ENCODE measurements at regions of chrX and their contacts with region 1.

Region 1: DNA sequence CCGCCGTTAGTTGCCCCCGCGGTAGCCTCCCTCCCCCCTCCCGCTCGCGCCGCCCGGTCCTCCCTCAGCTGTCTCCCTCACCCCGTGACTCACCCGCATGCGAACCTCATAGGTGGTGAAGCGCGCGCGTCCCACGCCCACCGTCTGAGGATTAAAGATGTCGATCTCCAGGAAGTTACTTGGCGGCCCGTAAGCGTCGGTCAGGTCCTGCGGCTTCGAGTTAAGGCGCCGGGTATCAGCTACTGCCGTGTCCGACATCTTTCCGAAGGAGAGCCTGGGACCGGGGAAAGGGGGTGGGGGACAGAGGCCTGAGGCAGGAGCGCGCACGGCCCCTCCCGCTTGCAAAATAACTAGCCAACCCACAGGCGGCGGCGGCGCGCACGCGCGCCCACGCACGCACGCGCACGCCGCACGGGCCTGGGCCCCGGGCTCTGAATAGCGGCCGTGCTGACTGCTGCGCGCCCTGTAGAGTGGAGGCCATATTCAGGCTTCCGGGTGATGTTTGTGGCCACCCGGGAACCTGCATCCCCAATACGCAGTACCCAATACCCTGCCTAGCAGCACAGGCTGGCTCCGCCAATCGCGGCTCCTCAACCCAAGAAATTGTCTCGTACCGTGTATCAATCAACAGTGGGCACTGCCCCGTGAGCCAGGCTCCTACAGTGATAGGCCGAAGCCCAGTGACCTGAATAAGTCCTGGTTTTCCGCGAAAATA is at the start of gene SNX12:
- DNase-seq: peak; percentile 79
- ATAC-seq: peak; percentile 94
- H3K4me3 Mint-ChIP-seq: peak within 1 kb of the TSS; percentile 94
- H3K27ac Mint-ChIP-seq: peak within 1 kb of the TSS; percentile 95
- H3K4me1 Mint-ChIP-seq: peaks cover 19% of the 10 kb centered on the region
- H3K27me3 Mint-ChIP-seq: peaks cover 3% of the 10 kb centered on the region
- CTCF ChIP-seq: no peak
- total RNA-seq, gene SNX12: 43.2 and 44.8 TPM in 2 replicates

Region 2: GRCh38 chrX:69597399-69597798 is 1470.8 kb before region 1 on chrX:
- CTCF ChIA-PET with region 1: no interaction called
- POLR2A ChIA-PET with region 1: no interaction called
- intact Hi-C with region 1: no loop called
- DNase-seq: no peak
- ATAC-seq: no peak
- H3K4me3 Mint-ChIP-seq: no peak overlapping the region
- H3K27ac Mint-ChIP-seq: no peak overlapping the region
- H3K4me1 Mint-ChIP-seq: no peaks in the 10 kb centered on the region
- H3K27me3 Mint-ChIP-seq: no peaks in the 10 kb centered on the region
- CTCF ChIP-seq: no peak

Region 3: GRCh38 chrX:70432936-70433847 is 635.0 kb before region 1 on chrX:
- CTCF ChIA-PET with region 1: no interaction called
- POLR2A ChIA-PET with region 1: no interaction called
- intact Hi-C with region 1: no loop called
- DNase-seq: no peak
- ATAC-seq: no peak
- H3K4me3 Mint-ChIP-seq: peak overlapping the region; percentile 89
- H3K27ac Mint-ChIP-seq: no peak overlapping the region
- H3K4me1 Mint-ChIP-seq: peaks cover 14% of the 10 kb centered on the region
- H3K27me3 Mint-ChIP-seq: no peaks in the 10 kb centered on the region
- CTCF ChIP-seq: no peak

Region 4: DNA sequence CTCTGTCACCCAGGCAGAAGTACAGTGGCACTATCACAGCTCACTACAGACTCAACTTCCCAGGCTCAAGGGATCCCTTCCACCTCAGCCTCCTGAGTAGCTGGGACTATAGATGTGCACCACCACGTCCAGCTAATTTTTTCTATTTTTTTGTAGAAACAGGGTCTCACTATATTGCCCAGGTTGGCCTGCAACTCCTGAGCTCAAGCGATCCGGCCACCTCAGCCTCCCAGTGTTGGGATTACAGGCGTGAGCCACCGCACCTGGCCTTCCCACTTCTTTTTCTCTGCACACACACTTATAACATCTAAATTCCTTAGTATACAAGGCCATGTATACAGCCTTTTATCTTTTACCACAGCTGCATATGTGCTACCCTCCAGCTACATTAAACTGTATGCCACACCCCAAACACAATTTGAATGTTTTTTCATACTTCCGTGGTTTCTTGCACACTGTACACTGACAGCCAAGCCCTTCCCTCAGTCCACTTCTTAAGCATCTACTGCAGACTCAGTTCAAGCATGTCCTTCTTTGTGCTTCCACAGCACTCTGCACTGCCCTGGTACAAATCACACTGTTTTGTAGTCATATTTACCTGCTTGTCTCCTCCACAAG is 143.8 kb before region 1 on chrX:
- CTCF ChIA-PET with region 1: no interaction called
- POLR2A ChIA-PET with region 1: no interaction called
- intact Hi-C with region 1: no loop called
- DNase-seq: no peak
- ATAC-seq: no peak
- H3K4me3 Mint-ChIP-seq: no peak overlapping the region
- H3K27ac Mint-ChIP-seq: no peak overlapping the region
- H3K4me1 Mint-ChIP-seq: no peaks in the 10 kb centered on the region
- H3K27me3 Mint-ChIP-seq: peaks cover 12% of the 10 kb centered on the region
- CTCF ChIP-seq: no peak

Region 5: DNA sequence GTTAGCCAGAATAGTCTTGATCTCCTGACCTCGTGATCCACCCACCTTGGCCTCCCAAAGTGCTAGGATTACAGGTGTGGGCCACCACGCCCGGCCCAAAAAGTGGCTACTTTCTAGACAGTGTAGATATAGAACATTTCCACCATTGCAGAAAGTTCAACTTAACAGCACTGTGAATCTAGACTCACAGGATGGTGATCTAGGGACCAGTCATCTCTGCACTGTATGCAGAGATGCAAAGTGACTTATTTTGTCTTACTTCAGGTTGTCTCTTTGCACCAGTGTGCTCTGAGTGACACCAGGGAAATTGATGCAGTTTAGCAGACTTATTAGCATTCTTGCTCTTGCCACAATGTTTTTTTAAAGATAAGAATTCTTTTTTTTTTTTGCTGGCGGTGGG is 14.6 kb after region 1 on chrX:
- CTCF ChIA-PET with region 1: no interaction called
- POLR2A ChIA-PET with region 1: no interaction called
- intact Hi-C with region 1: no loop called
- DNase-seq: no peak
- ATAC-seq: no peak
- H3K4me3 Mint-ChIP-seq: no peak overlapping the region
- H3K27ac Mint-ChIP-seq: no peak overlapping the region
- H3K4me1 Mint-ChIP-seq: no peaks in the 10 kb centered on the region
- H3K27me3 Mint-ChIP-seq: no peaks in the 10 kb centered on the region
- CTCF ChIP-seq: no peak

Region 6: GRCh38 chrX:71095543-71095911 is 27.3 kb after region 1 on chrX and contains the start of gene FOXO4:
- CTCF ChIA-PET with region 1: no interaction called
- POLR2A ChIA-PET with region 1: no interaction called
- intact Hi-C with region 1: loop called (anchors 1 kb)
- DNase-seq: peak; percentile 72
- ATAC-seq: peak; percentile 90
- H3K4me3 Mint-ChIP-seq: peak within 1 kb of the TSS; percentile 95
- H3K27ac Mint-ChIP-seq: peak within 1 kb of the TSS; percentile 93
- H3K4me1 Mint-ChIP-seq: peaks cover 26% of the 10 kb centered on the region
- H3K27me3 Mint-ChIP-seq: no peaks in the 10 kb centered on the region
- CTCF ChIP-seq: no peak
- total RNA-seq, gene FOXO4: 10.1 and 16.1 TPM in 2 replicates

Region 7: GRCh38 chrX:71118032-71118984 is 50.1 kb after region 1 on chrX and contains the start of gene MED12:
- CTCF ChIA-PET with region 1: no interaction called
- POLR2A ChIA-PET with region 1: interaction called, 39 read pairs
- intact Hi-C with region 1: loop called (anchors 2 kb)
- DNase-seq: peak; percentile 76
- ATAC-seq: peak; percentile 96
- H3K4me3 Mint-ChIP-seq: peak within 1 kb of the TSS; percentile 85
- H3K27ac Mint-ChIP-seq: peak within 1 kb of the TSS; percentile 89
- H3K4me1 Mint-ChIP-seq: peaks cover 16% of the 10 kb centered on the region
- H3K27me3 Mint-ChIP-seq: no peaks in the 10 kb centered on the region
- CTCF ChIP-seq: no peak
- total RNA-seq, gene MED12: 81.7 and 102 TPM in 2 replicates

Region 8: GRCh38 chrX:71254092-71254941 is 186.1 kb after region 1 on chrX and contains the start of gene ZMYM3:
- CTCF ChIA-PET with region 1: no interaction called
- POLR2A ChIA-PET with region 1: no interaction called
- intact Hi-C with region 1: loop called (anchors 1 kb)
- DNase-seq: peak; percentile 64
- ATAC-seq: peak; percentile 85
- H3K4me3 Mint-ChIP-seq: peak within 1 kb of the TSS; percentile 93
- H3K27ac Mint-ChIP-seq: peak within 1 kb of the TSS; percentile 87
- H3K4me1 Mint-ChIP-seq: peaks cover 21% of the 10 kb centered on the region
- H3K27me3 Mint-ChIP-seq: no peaks in the 10 kb centered on the region
- CTCF ChIP-seq: no peak
- total RNA-seq, gene ZMYM3: 27.9 and 28.2 TPM in 2 replicates

Region 9: DNA sequence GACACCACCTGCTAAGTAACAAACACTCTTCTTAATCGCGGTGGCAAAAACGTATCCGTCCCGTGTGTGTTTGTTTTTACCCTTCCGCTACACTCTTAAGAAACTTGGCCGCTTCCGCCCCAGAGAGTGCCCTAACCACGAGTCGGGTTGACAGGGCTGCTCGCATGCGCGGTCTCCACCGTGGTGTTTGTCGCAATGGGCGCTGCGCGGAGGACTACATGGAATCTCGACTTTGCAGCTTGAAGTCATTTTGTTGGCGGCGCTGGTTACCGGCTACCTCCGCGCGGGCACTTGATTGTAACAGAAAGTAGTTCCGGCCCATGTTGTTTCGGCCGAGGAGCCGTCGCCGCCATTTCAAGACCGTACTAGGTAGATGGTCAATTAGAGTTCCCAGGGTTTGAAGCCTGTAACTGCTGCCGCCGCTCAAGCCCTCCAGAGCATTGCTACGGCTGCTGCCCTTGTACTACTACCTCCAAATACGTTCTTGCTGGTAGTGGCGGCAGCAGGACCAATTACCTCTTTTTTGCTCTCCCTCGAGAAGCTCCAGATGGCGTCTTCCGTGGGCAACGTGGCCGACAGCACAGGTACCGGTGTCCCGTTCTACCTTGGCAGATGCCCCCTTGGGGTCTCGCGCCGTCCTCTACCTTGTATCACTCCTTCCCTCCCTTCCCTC is 464.7 kb after region 1 on chrX and contains the start of gene OGT:
- CTCF ChIA-PET with region 1: no interaction called
- POLR2A ChIA-PET with region 1: interaction called, 3 read pairs
- intact Hi-C with region 1: loop called (anchors 10 kb)
- DNase-seq: peak; percentile 77
- ATAC-seq: peak; percentile 82
- H3K4me3 Mint-ChIP-seq: peak within 1 kb of the TSS; percentile 96
- H3K27ac Mint-ChIP-seq: peak within 1 kb of the TSS; percentile 93
- H3K4me1 Mint-ChIP-seq: peaks cover 24% of the 10 kb centered on the region
- H3K27me3 Mint-ChIP-seq: no peaks in the 10 kb centered on the region
- CTCF ChIP-seq: no peak
- total RNA-seq, gene OGT: 223 and 272 TPM in 2 replicates